ENCODE measurements at regions of chr22 and their contacts with region 1.

Region 1: GRCh38 chr22:46737976-46738646 is at the start of gene CERK:
- DNase-seq: peak; percentile 59
- ATAC-seq: peak; percentile 66
- H3K4me3 Mint-ChIP-seq: peak within 1 kb of the TSS; percentile 100
- H3K27ac Mint-ChIP-seq: peak within 1 kb of the TSS; percentile 98
- H3K4me1 Mint-ChIP-seq: peaks cover 40% of the 10 kb centered on the region
- H3K27me3 Mint-ChIP-seq: no peaks in the 10 kb centered on the region
- total RNA-seq, gene CERK: 61.1 to 65.6 TPM

Region 2: GRCh38 chr22:46748908-46749675 is 11.0 kb after region 1 on chr22:
- CTCF ChIA-PET with region 1: interaction called, 8 read pairs
- POLR2A ChIA-PET with region 1: interaction called, 10 read pairs
- DNase-seq: peak; percentile 81
- ATAC-seq: peak; percentile 93
- H3K4me3 Mint-ChIP-seq: peak overlapping the region; percentile 73
- H3K27ac Mint-ChIP-seq: peak overlapping the region; percentile 98
- H3K4me1 Mint-ChIP-seq: peaks cover 24% of the 10 kb centered on the region
- H3K27me3 Mint-ChIP-seq: peaks cover 2% of the 10 kb centered on the region

Region 3: GRCh38 chr22:46792061-46792796 is 54.1 kb after region 1 on chr22:
- CTCF ChIA-PET with region 1: no interaction called
- POLR2A ChIA-PET with region 1: no interaction called
- DNase-seq: no peak
- ATAC-seq: no peak
- H3K4me3 Mint-ChIP-seq: peak overlapping the region; percentile 22
- H3K27ac Mint-ChIP-seq: peak overlapping the region; percentile 100
- H3K4me1 Mint-ChIP-seq: peaks cover 52% of the 10 kb centered on the region
- H3K27me3 Mint-ChIP-seq: no peaks in the 10 kb centered on the region